Calu3 (cell line): ENCODE measurements at regions of chr16 and their contacts with region 1.

Region 1: GRCh38 chr16:72501739-72502593 is 330.0 kb upstream of the PMFBP1 start:
- DNase-seq: peak; percentile 70
- H3K4me3 Mint-ChIP-seq: no peak overlapping the region
- H3K27ac Mint-ChIP-seq: no peak overlapping the region
- H3K4me1 Mint-ChIP-seq: no peaks in the 10 kb centered on the region
- H3K27me3 Mint-ChIP-seq: no peaks in the 10 kb centered on the region
- CTCF ChIP-seq: peak; percentile 74

Region 2: GRCh38 chr16:72832621-72833248 is 330.8 kb after region 1 on chr16:
- CTCF ChIA-PET with region 1: no interaction called
- intact Hi-C with region 1: loop called (anchors 5 kb)
- DNase-seq: peak; percentile 93
- H3K4me3 Mint-ChIP-seq: no peak overlapping the region
- H3K27ac Mint-ChIP-seq: no peak overlapping the region
- H3K4me1 Mint-ChIP-seq: no peaks in the 10 kb centered on the region
- H3K27me3 Mint-ChIP-seq: no peaks in the 10 kb centered on the region
- CTCF ChIP-seq: peak; percentile 95

Region 3: DNA sequence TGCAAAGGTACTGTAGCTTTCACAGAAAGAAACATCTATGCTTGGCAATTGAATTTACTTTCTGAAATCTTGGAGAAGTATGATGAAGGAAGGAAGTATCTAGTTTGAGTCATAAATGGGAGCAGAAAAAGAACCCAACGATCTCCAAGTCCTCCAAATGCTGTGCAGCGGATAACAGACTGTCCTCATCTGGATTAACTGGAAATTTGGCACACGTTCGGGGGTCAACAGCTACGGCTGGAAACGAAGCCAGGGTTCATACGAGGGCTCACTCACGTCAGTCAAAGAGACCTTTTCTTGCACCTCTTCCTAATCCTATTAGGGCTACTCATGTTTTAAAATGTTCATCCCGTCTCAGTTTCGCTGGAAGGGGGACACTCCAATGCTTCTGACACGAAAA is 394.0 kb after region 1 on chr16:
- CTCF ChIA-PET with region 1: no interaction called
- intact Hi-C with region 1: no loop called
- DNase-seq: no peak
- H3K4me3 Mint-ChIP-seq: no peak overlapping the region
- H3K27ac Mint-ChIP-seq: no peak overlapping the region
- H3K4me1 Mint-ChIP-seq: peaks cover 13% of the 10 kb centered on the region
- H3K27me3 Mint-ChIP-seq: no peaks in the 10 kb centered on the region
- CTCF ChIP-seq: no peak

Region 4: GRCh38 chr16:73047518-73048291 is 545.7 kb after region 1 on chr16 and contains the start of gene ZFHX3:
- CTCF ChIA-PET with region 1: no interaction called
- intact Hi-C with region 1: loop called (anchors 5 kb)
- DNase-seq: peak; percentile 71
- H3K4me3 Mint-ChIP-seq: peak within 1 kb of the TSS; percentile 51
- H3K27ac Mint-ChIP-seq: peak within 1 kb of the TSS; percentile 53
- H3K4me1 Mint-ChIP-seq: peaks cover 46% of the 10 kb centered on the region
- H3K27me3 Mint-ChIP-seq: no peaks in the 10 kb centered on the region
- CTCF ChIP-seq: no peak
- total RNA-seq, gene ZFHX3: 13.6 and 17.8 TPM in 2 replicates

Region 5: GRCh38 chr16:73329363-73330292 is 827.7 kb after region 1 on chr16:
- CTCF ChIA-PET with region 1: no interaction called
- intact Hi-C with region 1: loop called (anchors 5 kb)
- DNase-seq: peak; percentile 40
- H3K4me3 Mint-ChIP-seq: no peak overlapping the region
- H3K27ac Mint-ChIP-seq: no peak overlapping the region
- H3K4me1 Mint-ChIP-seq: no peaks in the 10 kb centered on the region
- H3K27me3 Mint-ChIP-seq: peaks cover 17% of the 10 kb centered on the region
- CTCF ChIP-seq: no peak

Region 6: DNA sequence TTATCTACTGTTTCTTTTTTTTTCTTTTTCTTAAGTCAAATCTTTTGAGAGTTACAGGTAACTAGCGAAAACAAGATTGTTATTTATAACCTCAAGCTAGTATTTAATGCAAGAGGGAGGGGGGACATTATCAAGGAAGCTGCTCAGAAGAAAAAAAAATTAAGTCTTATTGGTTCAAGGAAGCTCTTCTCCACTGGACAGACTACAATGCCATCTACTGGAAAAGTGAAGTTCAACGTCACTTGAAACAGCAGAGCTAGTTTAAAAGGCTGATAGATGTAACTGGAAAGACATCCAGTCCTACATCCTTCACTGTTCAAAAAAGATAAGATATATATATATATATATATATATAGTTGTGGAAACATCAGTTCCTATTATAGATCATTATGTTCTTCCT is 1376.6 kb after region 1 on chr16:
- CTCF ChIA-PET with region 1: no interaction called
- intact Hi-C with region 1: loop called (anchors 5 kb)
- DNase-seq: peak; percentile 30
- H3K4me3 Mint-ChIP-seq: no peak overlapping the region
- H3K27ac Mint-ChIP-seq: no peak overlapping the region
- H3K4me1 Mint-ChIP-seq: no peaks in the 10 kb centered on the region
- H3K27me3 Mint-ChIP-seq: peaks cover 79% of the 10 kb centered on the region
- CTCF ChIP-seq: peak; percentile 33